Activated CD4-positive, alpha-beta T cell treated with anti-CD3 and anti-CD28 coated beads for 36 hours (primary cell): ENCODE measurements at regions of chr12 and their contacts with region 1.

Region 1: GRCh38 chr12:80412369-80412953 is 31.6 kb upstream of the PTPRQ start:
- DNase-seq: no peak
- ATAC-seq: no peak
- H3K4me3 Mint-ChIP-seq: no peak overlapping the region
- H3K27ac Mint-ChIP-seq: no peak overlapping the region
- H3K4me1 Mint-ChIP-seq: no peaks in the 10 kb centered on the region
- H3K27me3 Mint-ChIP-seq: no peaks in the 10 kb centered on the region

Region 2: DNA sequence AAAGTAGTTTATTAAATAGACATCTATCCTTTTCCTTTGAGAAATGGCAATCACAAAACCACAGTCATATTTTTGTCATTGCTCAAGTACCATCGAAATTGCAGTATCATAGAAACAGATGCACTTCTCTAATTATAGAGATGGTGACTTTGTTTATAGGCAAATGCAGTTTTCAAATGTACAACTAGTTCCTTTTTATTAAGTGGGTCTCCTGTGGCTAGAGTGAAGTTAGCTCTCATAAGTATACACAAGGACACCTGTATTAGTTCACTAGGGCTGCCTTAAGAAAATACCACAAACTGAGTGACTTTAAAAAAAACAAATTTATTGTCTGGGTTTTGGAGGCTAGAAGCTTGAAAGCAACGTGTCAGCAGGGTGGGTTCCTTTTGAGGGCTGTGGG is 250.3 kb before region 1 on chr12:
- CTCF ChIA-PET with region 1: no interaction called
- POLR2A ChIA-PET with region 1: no interaction called
- intact Hi-C with region 1: no loop called
- DNase-seq: no peak
- ATAC-seq: no peak
- H3K4me3 Mint-ChIP-seq: no peak overlapping the region
- H3K27ac Mint-ChIP-seq: no peak overlapping the region
- H3K4me1 Mint-ChIP-seq: no peaks in the 10 kb centered on the region
- H3K27me3 Mint-ChIP-seq: peaks cover 6% of the 10 kb centered on the region

Region 3: DNA sequence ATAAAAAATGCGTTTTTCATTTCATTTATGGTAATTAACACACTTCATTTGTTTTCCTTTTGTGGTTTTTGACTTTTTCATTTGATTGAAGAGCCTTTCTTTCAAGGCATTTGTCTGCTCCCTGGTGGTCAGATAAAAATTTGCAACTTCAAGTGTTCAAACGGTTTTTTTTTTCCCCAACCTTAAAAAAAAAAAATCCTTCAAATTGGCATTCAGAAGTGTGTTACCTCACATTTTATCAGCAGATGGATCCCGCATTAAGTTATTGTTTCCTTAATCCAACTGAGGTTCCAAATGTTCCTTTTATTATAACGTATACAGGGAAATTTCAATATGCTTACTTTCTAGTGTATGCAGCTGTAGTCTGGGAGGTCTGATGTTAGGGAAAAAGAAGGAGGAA is 351.4 kb after region 1 on chr12:
- CTCF ChIA-PET with region 1: no interaction called
- POLR2A ChIA-PET with region 1: no interaction called
- intact Hi-C with region 1: loop called in 1 of 2 experiments (anchors 5 kb)
- DNase-seq: no peak
- ATAC-seq: no peak
- H3K4me3 Mint-ChIP-seq: no peak overlapping the region
- H3K27ac Mint-ChIP-seq: no peak overlapping the region
- H3K4me1 Mint-ChIP-seq: no peaks in the 10 kb centered on the region
- H3K27me3 Mint-ChIP-seq: no peaks in the 10 kb centered on the region

Region 4: DNA sequence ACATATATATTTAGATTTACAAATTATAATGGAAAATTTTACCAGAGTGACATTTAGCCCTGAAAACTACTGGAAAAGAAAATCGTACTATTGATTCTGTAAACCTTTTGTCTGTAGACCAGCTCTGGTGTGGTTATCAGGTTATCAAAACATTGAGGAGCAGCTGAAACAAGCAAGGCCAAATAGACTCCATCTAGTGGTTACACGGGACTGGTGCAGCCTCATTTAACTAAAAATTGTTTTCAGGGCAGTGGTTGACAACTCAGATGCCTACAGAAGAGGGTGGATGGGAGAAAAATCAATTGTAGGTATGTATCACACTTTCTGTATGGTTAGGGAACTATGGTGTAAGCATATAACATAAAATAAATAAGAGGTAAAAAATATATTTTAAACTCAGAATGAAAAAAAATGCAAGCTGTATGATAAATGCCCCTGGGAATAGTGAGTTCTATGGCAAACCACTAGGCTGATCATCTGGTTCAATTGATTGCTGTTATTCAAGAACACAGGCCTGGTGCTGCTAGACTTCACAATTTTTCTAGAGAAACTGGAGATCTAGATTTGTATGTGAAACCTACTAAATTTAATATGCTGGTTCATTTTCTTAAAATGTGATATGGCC is 716.6 kb after region 1 on chr12:
- CTCF ChIA-PET with region 1: no interaction called
- POLR2A ChIA-PET with region 1: no interaction called
- intact Hi-C with region 1: loop called (anchors 2 to 10 kb)
- DNase-seq: peak; percentile 5
- ATAC-seq: no peak
- H3K4me3 Mint-ChIP-seq: no peak overlapping the region
- H3K27ac Mint-ChIP-seq: no peak overlapping the region
- H3K4me1 Mint-ChIP-seq: no peaks in the 10 kb centered on the region
- H3K27me3 Mint-ChIP-seq: no peaks in the 10 kb centered on the region

Region 5: DNA sequence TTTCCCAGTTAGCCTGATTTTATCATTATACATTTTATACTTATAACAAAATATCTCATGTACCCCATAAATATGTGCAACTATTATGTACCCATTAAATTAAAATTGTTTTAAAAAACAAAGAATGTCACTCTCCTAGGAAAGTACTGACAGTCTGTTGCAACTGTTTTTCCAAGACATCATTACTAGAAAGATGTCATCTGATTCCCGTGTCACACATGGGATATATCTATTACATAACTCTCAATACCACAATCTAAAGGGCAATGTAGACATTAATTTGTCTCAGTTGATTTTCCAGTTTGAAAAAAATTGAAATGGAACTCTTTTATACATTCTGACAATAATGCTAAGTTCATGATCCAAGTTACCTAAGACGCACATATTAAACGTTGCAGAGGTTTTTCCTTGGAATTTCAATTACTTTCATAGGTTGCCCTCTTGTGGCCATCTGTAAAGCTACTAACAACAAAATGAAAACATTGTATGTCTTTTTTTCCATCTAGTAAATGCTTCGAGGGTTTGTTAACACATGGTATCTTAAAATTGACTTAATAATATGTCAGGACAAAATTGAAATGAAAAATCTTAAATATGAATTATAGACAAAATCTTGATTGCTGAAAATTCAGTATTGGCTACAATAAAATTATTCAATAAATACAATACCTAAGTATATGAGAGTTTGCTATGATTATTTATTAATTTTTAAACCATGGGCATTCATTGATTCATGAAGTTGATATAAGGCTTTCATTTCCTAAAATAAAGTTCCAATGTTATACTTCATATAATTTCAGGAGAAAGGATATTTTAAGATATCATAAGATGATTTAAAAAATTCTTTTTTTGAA is 1215.1 kb after region 1 on chr12:
- CTCF ChIA-PET with region 1: no interaction called
- POLR2A ChIA-PET with region 1: no interaction called
- intact Hi-C with region 1: loop called in 1 of 2 experiments (anchors 2 kb)
- DNase-seq: no peak
- ATAC-seq: no peak
- H3K4me3 Mint-ChIP-seq: no peak overlapping the region
- H3K27ac Mint-ChIP-seq: no peak overlapping the region
- H3K4me1 Mint-ChIP-seq: no peaks in the 10 kb centered on the region
- H3K27me3 Mint-ChIP-seq: peaks cover 5% of the 10 kb centered on the region